Heart left ventricle (tissue), 16 donors: ENCODE measurements at regions of chr17 and their contacts with region 1.

Region 1: GRCh38 chr17:3732210-3732621 is 8.5 kb downstream of the HASPIN start:
- DNase-seq: peak in 1 of 5 donors; percentile 35
- ATAC-seq: peak in 2 of 4 donors; percentile 29 to 60
- H3K4me3 ChIP-seq: no peak overlapping the region
- H3K27ac ChIP-seq: no peak overlapping the region
- H3K4me1 ChIP-seq: peaks cover 0 to 5% (median 0%) of the 10 kb centered on the region in 12 donors
- H3K27me3 ChIP-seq: peaks cover 0 to 8% (median 0%) of the 10 kb centered on the region in 9 donors
- CTCF ChIP-seq: no peak
- POLR2A ChIP-seq: no peak

Region 2: DNA sequence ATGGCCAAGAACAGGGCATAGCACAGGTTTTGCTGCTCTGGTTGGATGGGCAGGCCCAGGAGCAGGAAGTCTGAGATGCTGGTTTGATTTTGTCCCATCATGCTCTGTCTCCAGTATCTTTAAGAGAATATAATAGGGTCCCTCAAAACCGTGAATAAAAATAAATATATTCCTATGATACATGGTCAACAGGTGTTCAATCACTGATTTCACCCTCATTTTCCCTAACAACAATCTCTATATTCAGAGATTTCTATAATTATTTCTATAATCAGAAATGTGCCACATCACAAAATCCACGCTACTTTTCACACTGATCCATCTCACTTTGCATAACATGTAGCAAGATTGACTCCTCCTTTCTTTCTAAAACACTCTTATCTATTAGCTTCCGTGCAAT is 298.5 kb before region 1 on chr17 and contains the start of gene OR1E2:
- intact Hi-C with region 1: no loop called
- DNase-seq: no peak
- ATAC-seq: no peak
- H3K4me3 ChIP-seq: no peak within 1 kb of the TSS
- H3K27ac ChIP-seq: no peak within 1 kb of the TSS
- H3K4me1 ChIP-seq: no peaks in the 10 kb centered on the region
- H3K27me3 ChIP-seq: peaks cover 0 to 4% (median 0%) of the 10 kb centered on the region in 9 donors
- CTCF ChIP-seq: no peak
- POLR2A ChIP-seq: no peak
- total RNA-seq, gene OR1E2: 0.52 TPM in 1 of 9 donors, not detected in the others

Region 3: GRCh38 chr17:3697103-3697476 is 35.1 kb before region 1 on chr17:
- intact Hi-C with region 1: loop called in 1 of 10 experiments (anchors 2 kb)
- DNase-seq: no peak
- ATAC-seq: peak in 3 of 4 donors; percentile 38 to 40 (median 40)
- H3K4me3 ChIP-seq: peak overlapping the region in 6 of 12 donors; percentile 50 to 68 (median 59)
- H3K27ac ChIP-seq: peak overlapping the region in 2 of 12 donors; percentile 29 to 46
- H3K4me1 ChIP-seq: peaks cover 0 to 23% (median 8%) of the 10 kb centered on the region in 12 donors
- H3K27me3 ChIP-seq: peaks cover 0 to 39% (median 10%) of the 10 kb centered on the region in 9 donors
- CTCF ChIP-seq: no peak
- POLR2A ChIP-seq: no peak

Region 4: DNA sequence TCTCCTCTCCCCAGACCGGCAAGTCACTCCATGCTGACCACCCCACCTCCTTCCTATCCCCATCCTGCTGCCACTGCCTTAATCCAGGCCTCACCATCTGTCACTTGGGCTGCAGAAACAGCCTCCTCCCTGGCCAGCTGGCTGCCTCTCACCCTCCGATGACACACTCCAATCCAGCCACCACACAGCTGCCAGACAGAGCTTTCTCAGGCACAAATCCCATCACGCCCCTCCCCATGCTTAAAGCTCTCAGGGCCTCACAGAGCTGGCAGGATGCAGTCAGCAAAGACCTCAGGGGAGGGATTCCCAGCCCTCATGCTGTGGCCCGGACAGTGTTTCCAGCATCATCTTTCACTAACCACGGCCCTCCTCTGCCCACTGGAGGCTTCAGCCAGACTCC is 147.0 kb after region 1 on chr17:
- intact Hi-C with region 1: no loop called
- DNase-seq: peak in 2 of 5 donors; percentile 70 to 71
- ATAC-seq: peak; percentile 58 to 84 (median 72)
- H3K4me3 ChIP-seq: no peak overlapping the region
- H3K27ac ChIP-seq: peak overlapping the region in 3 of 12 donors; percentile 2 to 23 (median 18)
- H3K4me1 ChIP-seq: peaks cover 0 to 16% (median 8%) of the 10 kb centered on the region in 12 donors
- H3K27me3 ChIP-seq: no peaks in the 10 kb centered on the region
- CTCF ChIP-seq: no peak
- POLR2A ChIP-seq: no peak